Left lung (tissue), 14 donors: ENCODE measurements at regions of chr11 and their contacts with region 1.

Region 1: DNA sequence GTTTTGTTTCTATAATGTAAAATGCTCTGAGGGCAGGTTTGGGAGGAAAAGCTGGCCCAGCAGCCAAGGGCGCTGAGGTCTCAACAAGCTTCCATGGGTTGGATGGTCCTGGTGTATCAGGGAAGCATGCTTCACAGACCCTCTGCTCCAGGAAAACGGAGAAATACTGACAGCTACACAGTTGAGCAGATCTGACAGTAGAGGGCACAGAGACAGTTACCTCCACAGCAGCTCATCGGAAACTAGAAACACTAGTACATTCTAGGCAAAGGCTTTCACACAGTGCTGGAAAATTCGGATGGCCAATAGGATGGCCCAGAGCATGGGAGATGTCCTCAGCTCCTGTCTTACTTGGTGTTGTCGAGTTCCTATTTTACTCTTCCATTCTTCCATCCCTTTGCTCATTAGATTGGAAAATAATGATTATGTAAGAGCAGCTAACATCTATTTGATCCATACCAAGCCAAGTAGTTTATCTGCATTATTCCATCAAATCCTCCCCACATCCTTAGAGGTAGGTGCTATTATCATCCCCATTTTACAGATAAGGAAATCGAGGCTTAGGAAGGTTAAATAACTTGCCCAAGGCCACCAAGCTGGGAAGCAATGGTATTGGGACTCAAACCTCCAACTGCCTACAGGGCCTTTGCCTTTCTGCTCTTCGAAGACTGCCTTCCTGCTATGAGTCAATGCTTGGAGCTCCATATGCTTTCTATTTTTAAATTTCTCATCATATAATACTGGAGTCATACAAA is 28.3 kb downstream of the LMO2 start:
- DNase-seq: no peak
- ATAC-seq: no peak
- H3K4me3 ChIP-seq: no peak overlapping the region
- H3K27ac ChIP-seq: no peak overlapping the region
- H3K4me1 ChIP-seq: peaks cover 0 to 32% of the 10 kb centered on the region in 2 donors
- H3K27me3 ChIP-seq: peaks cover 1 to 14% of the 10 kb centered on the region in 2 donors
- CTCF ChIP-seq: no peak

Region 2: GRCh38 chr11:33965032-33965431 is 101.4 kb after region 1 on chr11:
- intact Hi-C with region 1: no loop called
- DNase-seq: no peak
- ATAC-seq: no peak
- H3K4me3 ChIP-seq: no peak overlapping the region
- H3K27ac ChIP-seq: no peak overlapping the region
- H3K4me1 ChIP-seq: peaks cover 0 to 6% of the 10 kb centered on the region in 2 donors
- H3K27me3 ChIP-seq: no peaks in the 10 kb centered on the region
- CTCF ChIP-seq: no peak

Region 3: GRCh38 chr11:33976495-33977199 is 113.1 kb after region 1 on chr11:
- intact Hi-C with region 1: loop called in 1 of 2 experiments (anchors 5 kb)
- DNase-seq: peak in 1 of 4 donors; percentile 28
- ATAC-seq: peak; percentile 34
- H3K4me3 ChIP-seq: no peak overlapping the region
- H3K27ac ChIP-seq: peak overlapping the region in 1 of 2 donors; percentile 33
- H3K4me1 ChIP-seq: peaks cover 0 to 5% of the 10 kb centered on the region in 2 donors
- H3K27me3 ChIP-seq: no peaks in the 10 kb centered on the region
- CTCF ChIP-seq: no peak